Pancreas (tissue), 10 donors: ENCODE measurements at regions of chr1 and their contacts with region 1.

Region 1: GRCh38 chr1:9867408-9868243 is 42.4 kb downstream of the CTNNBIP1 start:
- DNase-seq: peak; percentile 58 to 95 (median 82)
- ATAC-seq: peak; percentile 84 to 98 (median 94)
- H3K4me3 ChIP-seq: no peak overlapping the region
- H3K27ac ChIP-seq: no peak overlapping the region
- H3K4me1 ChIP-seq: no peaks in the 10 kb centered on the region
- H3K27me3 ChIP-seq: no peaks in the 10 kb centered on the region
- CTCF ChIP-seq: peak; percentile 92 to 99 (median 98)

Region 2: GRCh38 chr1:9784508-9785133 is 83.0 kb before region 1 on chr1:
- intact Hi-C with region 1: loop called in 2 of 3 experiments (anchors 5 kb)
- DNase-seq: peak in 3 of 6 donors; percentile 9 to 58 (median 46)
- ATAC-seq: peak; percentile 60 to 91 (median 80)
- H3K4me3 ChIP-seq: no peak overlapping the region
- H3K27ac ChIP-seq: no peak overlapping the region
- H3K4me1 ChIP-seq: peaks cover 0 to 3% (median 0%) of the 10 kb centered on the region in 3 donors
- H3K27me3 ChIP-seq: no peaks in the 10 kb centered on the region
- CTCF ChIP-seq: peak in 3 of 4 donors; percentile 42 to 55 (median 46)

Region 3: DNA sequence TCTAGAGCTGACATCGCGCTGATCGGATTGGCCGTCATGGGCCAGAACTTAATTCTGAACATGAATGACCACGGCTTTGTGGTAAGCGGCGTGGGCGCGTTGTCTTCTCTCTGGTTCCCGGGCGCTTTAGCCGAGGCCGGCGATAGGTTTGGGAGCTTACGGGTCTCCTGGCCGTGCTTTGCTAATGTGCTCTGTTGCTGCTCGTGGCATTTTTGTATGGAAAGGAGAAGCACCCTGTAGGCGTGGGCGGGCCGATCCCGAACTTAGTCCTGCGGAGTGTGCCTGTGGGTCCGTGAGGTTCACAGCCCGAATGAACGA is 532.0 kb after region 1 on chr1:
- intact Hi-C with region 1: no loop called
- DNase-seq: peak in 3 of 6 donors; percentile 7 to 34 (median 26)
- ATAC-seq: peak in 1 of 4 donors; percentile 4
- H3K4me3 ChIP-seq: peak overlapping the region; percentile 82 to 97 (median 94)
- H3K27ac ChIP-seq: peak overlapping the region in 2 of 4 donors; percentile 86
- H3K4me1 ChIP-seq: peaks cover 0 to 12% (median 0%) of the 10 kb centered on the region in 3 donors
- H3K27me3 ChIP-seq: no peaks in the 10 kb centered on the region
- CTCF ChIP-seq: no peak